Right cardiac atrium (tissue), 5 donors: ENCODE measurements at regions of chr5 and their contacts with region 1.

Region 1: DNA sequence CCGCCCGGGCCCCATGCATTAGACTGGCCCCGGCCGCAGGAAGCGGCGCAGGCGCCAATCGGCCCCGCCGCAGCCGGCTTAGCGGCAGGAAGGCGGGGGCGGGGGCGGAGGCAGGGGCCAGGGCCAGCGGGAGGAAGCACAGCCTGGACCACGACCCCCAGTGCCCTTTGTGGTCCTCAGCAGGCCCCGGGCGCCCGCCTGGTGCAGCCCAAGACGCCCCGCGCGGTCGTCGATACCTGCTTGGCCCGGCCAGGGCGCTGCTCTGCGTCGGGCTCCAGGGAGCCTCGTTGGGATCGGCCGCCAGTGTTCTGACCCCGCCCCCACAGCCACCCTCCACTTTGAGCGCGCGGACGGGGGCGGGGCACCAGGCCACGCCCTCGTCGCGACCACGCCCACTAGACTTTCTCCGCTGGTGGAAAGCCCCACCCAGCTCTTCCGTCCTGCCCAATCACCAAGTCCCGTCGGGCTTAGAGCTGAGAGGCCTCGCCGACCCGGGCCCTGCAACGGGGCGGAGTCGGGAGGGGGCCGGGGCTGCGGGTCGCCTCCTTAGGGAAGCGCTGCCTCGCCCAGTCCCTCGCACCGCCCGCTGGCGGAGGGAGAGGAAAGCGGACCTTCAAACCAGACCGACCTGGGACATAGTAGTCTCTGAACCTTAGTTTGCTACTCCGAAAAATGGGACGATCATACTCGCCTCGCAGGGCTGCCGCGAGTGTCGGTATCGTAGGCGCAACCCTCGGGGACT is at the start of gene PDLIM7:
- DNase-seq: peak; percentile 97 to 99 (median 98)
- ATAC-seq: peak; percentile 84 to 90
- H3K4me3 ChIP-seq: peak within 1 kb of the TSS; percentile 72
- H3K27ac ChIP-seq: peak within 1 kb of the TSS; percentile 86
- H3K4me1 ChIP-seq: peaks cover 6% of the 10 kb centered on the region
- H3K27me3 ChIP-seq: no peaks in the 10 kb centered on the region
- total RNA-seq, gene PDLIM7: 35.0 to 71.5 (median 47.0) TPM

Region 2: GRCh38 chr5:177094224-177095087 is 403.0 kb before region 1 on chr5:
- intact Hi-C with region 1: no loop called
- DNase-seq: peak; percentile 87 to 96 (median 94)
- ATAC-seq: peak; percentile 73 to 77
- H3K4me3 ChIP-seq: no peak overlapping the region
- H3K27ac ChIP-seq: no peak overlapping the region
- H3K4me1 ChIP-seq: peaks cover 13% of the 10 kb centered on the region
- H3K27me3 ChIP-seq: no peaks in the 10 kb centered on the region

Region 3: GRCh38 chr5:177311723-177312648 is 185.5 kb before region 1 on chr5 and contains the start of gene MXD3:
- intact Hi-C with region 1: loop called in 1 of 4 experiments (anchors 10 kb)
- DNase-seq: peak; percentile 98 to 99 (median 98)
- ATAC-seq: peak; percentile 92 to 93
- H3K4me3 ChIP-seq: peak within 1 kb of the TSS; percentile 50
- H3K27ac ChIP-seq: no peak within 1 kb of the TSS
- H3K4me1 ChIP-seq: peaks cover 3% of the 10 kb centered on the region
- H3K27me3 ChIP-seq: no peaks in the 10 kb centered on the region
- total RNA-seq, gene MXD3: 2.4 to 3.6 (median 2.6) TPM

Region 4: DNA sequence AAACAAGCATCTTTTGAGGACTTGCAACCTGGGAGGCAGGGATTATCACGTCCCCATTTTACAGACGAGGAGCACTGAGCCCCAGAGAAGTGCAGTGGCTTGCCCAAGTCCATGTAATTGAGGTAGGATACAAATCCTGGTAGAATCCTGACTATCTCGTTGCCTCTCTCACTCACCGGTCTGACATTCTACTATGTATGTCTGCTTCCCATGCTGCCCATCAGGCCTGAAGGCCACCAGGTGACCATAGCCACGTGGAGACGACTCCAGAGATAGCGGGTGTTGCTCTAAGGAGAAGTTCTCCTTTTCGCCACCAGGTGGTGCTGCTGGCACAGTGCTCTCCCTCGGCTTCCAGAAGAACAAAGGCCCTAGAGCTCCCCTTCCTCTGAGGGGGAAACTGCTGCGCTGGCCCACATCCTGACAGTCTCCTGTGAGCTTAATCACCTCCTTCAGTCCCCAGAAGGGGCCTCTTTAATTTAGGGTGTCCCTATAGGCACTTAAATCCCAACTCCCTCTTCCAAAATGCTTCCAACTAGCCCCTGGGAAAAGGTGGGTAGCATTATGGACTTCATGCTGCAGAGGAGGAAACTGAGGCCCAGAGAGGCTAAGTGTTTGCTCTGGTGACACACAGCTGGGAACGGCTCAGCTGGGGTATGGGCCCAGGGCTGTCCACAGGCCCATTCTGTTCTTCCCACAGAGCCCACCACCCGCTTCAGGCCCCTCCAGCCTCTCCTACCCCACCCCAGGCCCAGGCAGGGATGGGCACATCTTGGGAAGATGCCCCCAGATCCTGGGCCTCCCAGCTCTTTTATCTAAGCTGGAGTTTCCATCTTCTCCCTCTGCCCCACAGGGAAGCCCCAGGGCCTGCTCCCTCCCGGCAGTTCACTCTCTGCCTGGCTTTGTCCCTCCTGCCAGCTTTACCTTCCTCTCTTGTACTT is 106.8 kb before region 1 on chr5:
- intact Hi-C with region 1: loop called (anchors 1 to 5 kb)
- DNase-seq: peak; percentile 72 to 88 (median 83)
- ATAC-seq: peak; percentile 81 to 84
- H3K4me3 ChIP-seq: no peak overlapping the region
- H3K27ac ChIP-seq: no peak overlapping the region
- H3K4me1 ChIP-seq: no peaks in the 10 kb centered on the region
- H3K27me3 ChIP-seq: no peaks in the 10 kb centered on the region

Region 5: GRCh38 chr5:177403792-177404640 is 93.4 kb before region 1 on chr5:
- intact Hi-C with region 1: loop called in 1 of 4 experiments (anchors 5 kb)
- DNase-seq: peak; percentile 89 to 96 (median 95)
- ATAC-seq: peak; percentile 95
- H3K4me3 ChIP-seq: peak overlapping the region; percentile 18
- H3K27ac ChIP-seq: no peak overlapping the region
- H3K4me1 ChIP-seq: no peaks in the 10 kb centered on the region
- H3K27me3 ChIP-seq: no peaks in the 10 kb centered on the region

Region 6: DNA sequence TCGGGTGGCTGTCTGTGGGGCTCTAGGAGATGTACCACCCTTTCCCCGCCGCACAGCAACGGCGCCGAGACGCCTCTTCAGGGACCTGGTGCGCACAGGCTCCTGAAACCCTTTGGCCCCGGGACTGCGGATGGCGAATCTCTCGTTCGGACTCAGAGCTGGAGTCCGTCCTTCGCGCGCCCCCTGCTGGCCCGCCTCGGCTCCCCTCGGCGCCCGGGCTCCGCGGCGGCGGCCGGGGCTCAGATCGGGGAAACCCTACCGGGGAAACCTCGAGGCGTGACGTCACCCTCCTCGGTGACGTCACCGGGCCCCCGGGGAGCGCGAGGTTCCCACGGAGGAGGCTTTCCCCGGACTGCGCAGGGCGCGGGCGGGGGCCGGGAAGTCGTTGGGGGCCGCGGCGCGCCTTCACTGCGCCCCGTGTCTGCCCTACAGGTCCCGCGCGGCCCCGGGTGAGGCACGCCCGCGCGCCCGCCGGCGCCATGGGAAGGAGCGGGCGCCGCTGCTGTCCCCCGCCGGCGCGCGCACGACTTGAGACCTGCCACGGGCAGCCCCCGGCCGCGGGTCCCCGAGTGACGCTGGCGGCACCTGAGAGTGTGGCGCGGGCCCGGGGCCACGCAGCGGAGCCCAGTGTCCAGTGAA is 42.9 kb before region 1 on chr5:
- intact Hi-C with region 1: loop called in 2 of 4 experiments (anchors 5 kb)
- DNase-seq: peak; percentile 91 to 97 (median 97)
- ATAC-seq: peak; percentile 72 to 73
- H3K4me3 ChIP-seq: peak overlapping the region; percentile 54
- H3K27ac ChIP-seq: no peak overlapping the region
- H3K4me1 ChIP-seq: no peaks in the 10 kb centered on the region
- H3K27me3 ChIP-seq: no peaks in the 10 kb centered on the region